PC-9 (cell line): ENCODE measurements at regions of chr6 and their contacts with region 1.

Region 1: DNA sequence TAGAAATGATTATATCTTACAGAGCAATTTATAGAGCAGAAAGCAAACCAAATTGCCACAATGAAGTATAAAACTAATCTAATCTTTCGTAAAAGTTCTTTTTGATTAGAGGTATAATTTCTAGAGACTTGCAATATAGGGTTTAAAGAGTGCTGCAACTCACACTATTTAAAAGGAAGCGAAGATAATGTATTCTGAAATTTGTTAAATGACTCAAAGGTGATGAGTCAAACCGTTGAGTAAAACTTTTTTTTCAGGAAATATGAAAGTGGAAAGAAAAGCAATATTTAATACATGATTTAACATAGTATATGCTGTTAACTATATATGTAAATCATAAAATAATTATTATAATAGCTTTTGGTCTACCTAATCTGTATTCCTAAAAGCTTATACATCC is 133.6 kb downstream of the SYNE1 start:
- DNase-seq: no peak
- H3K4me3 ChIP-seq: no peak overlapping the region
- H3K27ac ChIP-seq: no peak overlapping the region
- H3K4me1 ChIP-seq: no peaks in the 10 kb centered on the region
- H3K27me3 ChIP-seq: no peaks in the 10 kb centered on the region
- CTCF ChIP-seq: no peak

Region 2: DNA sequence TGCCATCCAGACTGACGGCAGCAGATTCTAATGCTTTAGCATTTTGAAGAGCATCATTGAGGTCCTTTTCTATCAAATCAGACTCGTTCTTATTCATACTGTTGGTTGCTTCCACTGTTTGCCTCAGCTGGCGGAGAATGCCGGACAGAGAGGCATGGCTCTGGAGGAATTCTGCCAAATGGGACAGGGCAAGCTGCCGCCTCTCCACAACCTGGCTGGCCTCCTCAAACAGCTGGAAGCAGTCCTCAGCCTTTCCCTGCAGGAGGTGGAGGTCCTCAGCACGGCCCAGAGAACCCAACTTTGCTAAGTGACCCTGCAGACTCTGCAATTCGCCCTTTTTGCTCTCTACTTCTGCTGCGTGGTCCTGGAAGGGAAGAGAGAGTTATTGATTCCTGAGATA is 86.9 kb before region 1 on chr6:
- CTCF ChIA-PET with region 1: no interaction called
- POLR2A ChIA-PET with region 1: interaction called, 11 read pairs
- intact Hi-C with region 1: no loop called
- DNase-seq: no peak
- H3K4me3 ChIP-seq: no peak overlapping the region
- H3K27ac ChIP-seq: no peak overlapping the region
- H3K4me1 ChIP-seq: no peaks in the 10 kb centered on the region
- H3K27me3 ChIP-seq: no peaks in the 10 kb centered on the region
- CTCF ChIP-seq: no peak

Region 3: GRCh38 chr6:152575621-152576150 is 72.1 kb after region 1 on chr6:
- CTCF ChIA-PET with region 1: no interaction called
- POLR2A ChIA-PET with region 1: no interaction called
- intact Hi-C with region 1: no loop called
- DNase-seq: no peak
- H3K4me3 ChIP-seq: no peak overlapping the region
- H3K27ac ChIP-seq: no peak overlapping the region
- H3K4me1 ChIP-seq: peaks cover 12% of the 10 kb centered on the region; the same call in 1 of the 2 replicates
- H3K27me3 ChIP-seq: no peaks in the 10 kb centered on the region
- CTCF ChIP-seq: no peak